GM13977 (cell line): ENCODE measurements at regions of chr1 and their contacts with region 1.

Region 1: DNA sequence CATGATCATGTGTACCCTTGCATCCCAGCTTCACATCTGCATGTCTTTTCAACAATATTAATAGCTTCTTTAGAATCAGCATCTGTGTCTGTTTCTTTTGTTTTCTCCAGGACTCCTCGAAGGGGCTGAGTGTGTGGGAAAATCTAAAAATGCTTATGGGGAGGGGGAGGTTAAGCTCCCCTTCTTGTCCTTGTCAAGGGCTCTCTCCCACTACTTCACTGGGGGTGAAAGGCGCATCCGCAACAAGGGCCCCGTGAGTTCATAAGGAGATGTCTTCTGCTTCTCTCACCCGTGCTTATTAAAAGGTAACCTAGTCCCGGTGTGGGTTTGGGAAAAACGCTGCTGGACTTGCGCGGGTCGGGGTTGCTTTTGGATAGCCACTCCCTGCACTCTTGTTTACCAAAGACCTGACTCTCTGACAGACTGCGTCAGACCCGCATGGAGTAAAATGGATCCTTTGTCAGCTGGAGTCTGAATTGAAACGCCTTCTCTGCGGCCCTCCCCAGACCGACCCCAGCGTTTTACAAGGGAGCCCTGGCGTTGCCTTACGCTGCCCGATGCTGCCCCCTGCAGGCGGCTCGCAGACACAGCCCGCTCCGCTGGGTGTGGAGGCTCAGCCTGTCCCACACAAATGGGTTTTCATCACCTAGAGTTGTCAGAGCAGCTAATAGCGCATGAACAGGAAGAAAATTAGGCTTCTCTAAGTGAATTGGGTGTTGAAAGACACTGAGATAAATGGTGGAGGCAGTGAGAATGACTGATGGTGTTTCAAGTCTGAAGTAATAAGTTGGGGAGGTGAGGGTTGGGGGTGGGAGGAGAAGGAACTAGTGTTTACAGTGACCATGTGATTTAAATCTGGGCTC is 53.8 kb downstream of the IER5 start:
- DNase-seq: peak; percentile 75
- CTCF ChIP-seq: peak; percentile 99

Region 2: DNA sequence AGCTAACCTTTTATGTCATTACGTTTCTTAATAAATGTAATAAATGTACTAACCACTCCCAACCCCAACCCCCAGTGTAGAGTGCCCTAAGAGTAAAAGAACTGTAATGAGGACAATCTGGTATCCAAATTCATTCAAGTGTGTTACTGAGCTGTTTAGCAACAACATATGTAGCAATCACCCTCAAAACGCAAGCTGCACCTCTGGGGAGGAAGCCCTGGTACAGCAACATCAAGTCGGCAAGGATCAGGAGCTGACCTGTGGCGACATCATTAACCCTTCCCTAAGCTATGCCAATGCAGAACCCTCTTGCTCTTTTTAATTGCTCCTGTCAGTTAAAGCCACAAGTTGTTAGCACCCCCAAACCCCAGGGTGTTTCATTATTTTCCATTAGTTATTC is 166.8 kb before region 1 on chr1:
- in situ Hi-C with region 1: no loop called
- DNase-seq: no peak
- CTCF ChIP-seq: no peak

Region 3: GRCh38 chr1:181033799-181034451 is 108.4 kb before region 1 on chr1 and contains the start of gene MR1:
- in situ Hi-C with region 1: loop called (anchors 10 kb)
- DNase-seq: peak; percentile 83
- CTCF ChIP-seq: no peak

Region 4: GRCh38 chr1:181789395-181789794 is 647.1 kb after region 1 on chr1:
- in situ Hi-C with region 1: no loop called
- DNase-seq: no peak
- CTCF ChIP-seq: no peak